Ascending aorta (tissue), 2 donors: ENCODE measurements at regions of chr22 and their contacts with region 1.

Region 1: DNA sequence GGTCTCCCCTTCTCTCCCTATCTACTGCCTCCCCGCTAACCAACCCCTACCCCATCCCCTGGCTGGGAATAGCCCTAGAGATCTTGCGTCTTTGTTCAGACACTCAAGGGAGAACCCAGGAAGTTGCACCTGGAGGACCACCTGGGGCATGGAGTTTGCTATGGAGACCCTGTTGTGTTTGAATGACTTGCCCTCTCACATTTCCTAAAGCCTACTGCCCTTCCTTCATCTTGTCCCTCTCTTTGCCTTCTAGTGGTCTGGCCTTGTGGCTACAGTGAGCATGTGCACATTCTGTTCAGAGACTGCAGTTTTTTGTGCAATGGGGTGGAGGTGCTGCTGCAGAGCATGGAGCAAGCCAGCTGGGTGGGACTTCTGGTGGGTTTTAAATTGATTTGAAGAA is 42.5 kb downstream of the ZNRF3 start:
- DNase-seq: no peak
- H3K4me3 ChIP-seq: no peak overlapping the region
- H3K27ac ChIP-seq: no peak overlapping the region
- H3K4me1 ChIP-seq: peaks cover 3 to 26% of the 10 kb centered on the region in 2 donors
- H3K27me3 ChIP-seq: no peaks in the 10 kb centered on the region
- CTCF ChIP-seq: no peak

Region 2: GRCh38 chr22:29040385-29041275 is 114.7 kb after region 1 on chr22:
- intact Hi-C with region 1: loop called (anchors 5 kb)
- DNase-seq: peak in 1 of 2 donors; percentile 85
- H3K4me3 ChIP-seq: no peak overlapping the region
- H3K27ac ChIP-seq: peak overlapping the region in 1 of 2 donors; percentile 35
- H3K4me1 ChIP-seq: peaks cover 0 to 19% of the 10 kb centered on the region in 2 donors
- H3K27me3 ChIP-seq: no peaks in the 10 kb centered on the region
- CTCF ChIP-seq: peak; percentile 94 to 97 (median 96)